ENCODE measurements at regions of chr10 and their contacts with region 1.

Region 1: DNA sequence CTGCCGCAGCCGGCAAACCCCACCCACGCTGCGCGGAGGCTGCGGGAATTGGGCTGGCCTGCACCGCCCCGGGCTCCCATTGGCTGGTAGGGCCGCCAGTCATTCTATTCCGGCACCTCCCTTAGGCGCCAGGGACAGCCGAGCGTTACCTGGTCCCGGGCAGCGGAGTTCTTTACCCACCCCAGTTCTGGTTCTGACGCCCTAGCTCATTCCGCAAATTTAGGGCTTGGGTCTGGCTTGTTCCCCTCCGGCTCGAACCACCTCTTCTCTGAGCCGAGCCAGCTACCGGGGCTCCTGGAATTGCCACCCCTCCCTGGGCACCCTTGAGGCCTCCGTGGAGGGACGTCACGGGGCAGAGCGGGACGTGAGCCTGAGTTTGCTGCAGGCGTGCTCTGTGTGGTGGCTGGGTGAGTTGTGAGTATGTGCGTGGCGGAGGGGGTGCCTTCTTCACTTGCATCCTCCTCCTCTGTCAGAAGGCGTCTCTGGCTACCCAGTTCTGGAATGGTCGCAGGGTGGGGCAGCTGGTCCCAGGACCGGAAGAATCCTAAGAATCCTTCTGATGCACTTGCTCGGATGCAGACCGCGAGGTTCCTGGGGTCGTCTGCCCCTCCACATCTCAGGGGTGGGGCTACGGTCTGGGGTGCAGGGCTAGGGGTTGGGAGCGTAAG is at the starts of genes PDZD7 and SFXN3:
- DNase-seq: peak; percentile 88
- H3K4me3 ChIP-seq: peak within 1 kb of the TSS; percentile 48 to 77 (median 71)
- H3K27ac ChIP-seq: peak within 1 kb of the TSS; percentile 91
- H3K4me1 ChIP-seq: peaks cover 16% of the 10 kb centered on the region
- H3K27me3 ChIP-seq: peaks cover 0 to 9% of the 10 kb centered on the region in 2 experiments
- CTCF ChIP-seq: no peak
- POLR2A ChIP-seq: no peak
- total RNA-seq, gene PDZD7: 0.55 and 1.6 TPM in 2 replicates
- total RNA-seq, gene SFXN3: 79.6 and 83.1 TPM in 2 replicates

Region 2: DNA sequence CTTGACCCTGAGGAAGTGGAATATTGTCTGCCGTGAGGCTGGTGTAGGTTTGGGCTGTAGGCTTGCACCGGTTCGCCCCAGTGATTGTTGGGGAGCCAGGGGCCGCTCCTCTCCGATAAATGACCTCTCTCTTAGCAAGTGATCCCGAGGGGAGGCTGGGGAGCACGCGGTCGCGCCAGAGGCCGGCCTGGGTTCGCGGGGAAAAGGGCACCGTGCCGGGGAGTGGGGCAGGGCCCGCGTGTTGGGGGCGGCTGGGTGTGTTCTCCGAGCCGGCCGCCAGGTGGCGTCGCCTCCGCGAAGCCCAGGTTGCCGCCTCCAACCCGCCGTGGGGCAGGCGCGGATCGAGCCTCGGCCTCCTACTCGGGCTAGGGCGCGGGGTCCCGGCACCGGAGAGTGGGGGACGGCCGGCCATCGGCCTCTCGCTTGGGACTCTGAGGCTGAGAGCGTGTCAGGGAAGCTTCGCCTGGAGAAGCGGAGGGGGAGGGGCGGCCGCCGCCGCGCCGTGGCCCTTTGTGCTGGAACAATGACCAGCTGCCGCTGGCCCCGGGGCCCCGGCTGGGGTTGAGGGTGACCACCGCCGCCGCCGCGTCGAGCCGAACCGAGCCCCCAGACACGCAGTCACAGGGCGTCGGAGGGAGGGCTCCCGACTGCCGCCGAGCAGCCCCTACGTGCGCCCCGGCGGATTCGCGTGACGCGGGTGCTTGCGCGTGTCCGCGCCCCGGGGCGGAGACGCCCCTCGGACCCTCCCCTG is 32.1 kb before region 1 on chr10:
- CTCF ChIA-PET with region 1: interaction called, 15 read pairs
- POLR2A ChIA-PET with region 1: no interaction called
- dilution Hi-C with region 1: no loop called
- intact Hi-C with region 1: loop called (anchors 1 kb)
- DNase-seq: peak; percentile 75
- H3K4me3 ChIP-seq: peak overlapping the region; percentile 6 to 85 (median 29)
- H3K27ac ChIP-seq: peak overlapping the region; percentile 86
- H3K4me1 ChIP-seq: peaks cover 33% of the 10 kb centered on the region
- H3K27me3 ChIP-seq: no peaks in the 10 kb centered on the region
- CTCF ChIP-seq: peak; percentile 92 to 95
- POLR2A ChIP-seq: peak; percentile 76

Region 3: GRCh38 chr10:101042667-101043355 is 11.5 kb after region 1 on chr10:
- CTCF ChIA-PET with region 1: interaction called, 66 read pairs
- POLR2A ChIA-PET with region 1: interaction called, 3 read pairs
- dilution Hi-C with region 1: no loop called
- intact Hi-C with region 1: loop called (anchors 1 kb)
- DNase-seq: peak; percentile 97
- H3K4me3 ChIP-seq: peak overlapping the region; percentile 12 to 50 (median 38)
- H3K27ac ChIP-seq: peak overlapping the region; percentile 71
- H3K4me1 ChIP-seq: peaks cover 11% of the 10 kb centered on the region
- H3K27me3 ChIP-seq: peaks cover 17% of the 10 kb centered on the region in 2 experiments
- CTCF ChIP-seq: no peak
- POLR2A ChIP-seq: peak; percentile 64

Region 4: DNA sequence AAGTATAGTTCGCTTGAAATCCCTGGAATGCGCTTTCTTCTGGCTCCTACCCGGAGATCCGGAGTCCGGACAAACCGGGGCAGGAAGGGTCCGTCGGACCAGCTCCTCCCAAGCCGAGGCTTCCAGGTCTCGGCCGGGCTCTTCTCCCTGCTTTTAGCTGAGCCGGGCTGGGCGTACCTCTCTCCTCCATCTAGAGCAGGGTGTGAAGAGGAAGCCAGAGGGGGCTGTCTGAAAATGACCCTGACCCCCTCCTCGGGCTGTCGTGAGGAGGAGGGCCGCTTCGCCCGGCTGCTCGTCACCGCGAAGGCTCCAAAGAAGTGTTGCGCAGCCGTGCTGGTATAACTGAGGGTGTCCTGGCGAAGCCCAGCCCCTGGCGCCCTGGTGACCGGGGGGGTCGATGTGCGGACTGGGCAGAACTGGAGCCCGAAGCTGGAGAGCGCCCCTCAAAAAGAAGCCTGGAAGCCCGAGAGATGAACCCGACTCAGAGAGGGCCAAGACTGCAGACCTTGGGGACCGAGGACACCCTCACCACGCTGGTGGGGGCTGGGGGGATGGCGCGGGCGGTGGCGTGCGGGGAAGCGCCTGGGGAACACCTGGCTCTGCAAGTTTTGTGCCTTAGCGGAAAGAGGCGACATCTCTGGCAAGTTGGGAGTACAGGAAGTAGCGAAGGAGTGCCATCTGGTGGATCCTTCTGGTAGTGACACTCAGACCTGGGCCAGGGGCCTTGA is 36.3 kb after region 1 on chr10:
- CTCF ChIA-PET with region 1: interaction called, 9 read pairs
- POLR2A ChIA-PET with region 1: no interaction called
- dilution Hi-C with region 1: no loop called
- intact Hi-C with region 1: loop called (anchors 5 kb)
- DNase-seq: peak; percentile 85
- H3K4me3 ChIP-seq: peak overlapping the region; percentile 47 to 60 (median 54)
- H3K27ac ChIP-seq: no peak overlapping the region
- H3K4me1 ChIP-seq: peaks cover 27% of the 10 kb centered on the region
- H3K27me3 ChIP-seq: peaks cover 0 to 1% of the 10 kb centered on the region in 2 experiments
- CTCF ChIP-seq: peak; percentile 78 to 80
- POLR2A ChIP-seq: no peak